T-cell (primary cell): ENCODE measurements at regions of chr22 and their contacts with region 1.

Region 1: GRCh38 chr22:40666151-40666848 is 13.0 kb upstream of the MCHR1 start:
- DNase-seq: no peak
- ATAC-seq: no peak
- H3K4me3 ChIP-seq: no peak overlapping the region
- H3K4me3 Mint-ChIP-seq: no peak overlapping the region
- H3K27ac ChIP-seq: no peak overlapping the region
- H3K27ac Mint-ChIP-seq: no peak overlapping the region
- H3K4me1 ChIP-seq: no peaks in the 10 kb centered on the region
- H3K4me1 Mint-ChIP-seq: peaks cover 10 to 14% (median 11%) of the 10 kb centered on the region in 3 donors
- H3K27me3 ChIP-seq: peaks cover 0 to 5% of the 10 kb centered on the region in 2 experiments
- H3K27me3 Mint-ChIP-seq: no peaks in the 10 kb centered on the region

Region 2: GRCh38 chr22:39478441-39479264 is 1187.6 kb before region 1 on chr22:
- CTCF ChIA-PET with region 1: interaction called in 1 of 2 experiments, 14 read pairs
- POLR2A ChIA-PET with region 1: no interaction called
- DNase-seq: peak in 3 of 35 experiments; percentile 17 to 36 (median 22)
- ATAC-seq: no peak
- H3K4me3 ChIP-seq: no peak overlapping the region
- H3K4me3 Mint-ChIP-seq: no peak overlapping the region
- H3K27ac ChIP-seq: no peak overlapping the region
- H3K27ac Mint-ChIP-seq: no peak overlapping the region
- H3K4me1 ChIP-seq: no peaks in the 10 kb centered on the region
- H3K4me1 Mint-ChIP-seq: no peaks in the 10 kb centered on the region
- H3K27me3 ChIP-seq: peaks cover 0 to 29% of the 10 kb centered on the region in 2 experiments
- H3K27me3 Mint-ChIP-seq: no peaks in the 10 kb centered on the region

Region 3: DNA sequence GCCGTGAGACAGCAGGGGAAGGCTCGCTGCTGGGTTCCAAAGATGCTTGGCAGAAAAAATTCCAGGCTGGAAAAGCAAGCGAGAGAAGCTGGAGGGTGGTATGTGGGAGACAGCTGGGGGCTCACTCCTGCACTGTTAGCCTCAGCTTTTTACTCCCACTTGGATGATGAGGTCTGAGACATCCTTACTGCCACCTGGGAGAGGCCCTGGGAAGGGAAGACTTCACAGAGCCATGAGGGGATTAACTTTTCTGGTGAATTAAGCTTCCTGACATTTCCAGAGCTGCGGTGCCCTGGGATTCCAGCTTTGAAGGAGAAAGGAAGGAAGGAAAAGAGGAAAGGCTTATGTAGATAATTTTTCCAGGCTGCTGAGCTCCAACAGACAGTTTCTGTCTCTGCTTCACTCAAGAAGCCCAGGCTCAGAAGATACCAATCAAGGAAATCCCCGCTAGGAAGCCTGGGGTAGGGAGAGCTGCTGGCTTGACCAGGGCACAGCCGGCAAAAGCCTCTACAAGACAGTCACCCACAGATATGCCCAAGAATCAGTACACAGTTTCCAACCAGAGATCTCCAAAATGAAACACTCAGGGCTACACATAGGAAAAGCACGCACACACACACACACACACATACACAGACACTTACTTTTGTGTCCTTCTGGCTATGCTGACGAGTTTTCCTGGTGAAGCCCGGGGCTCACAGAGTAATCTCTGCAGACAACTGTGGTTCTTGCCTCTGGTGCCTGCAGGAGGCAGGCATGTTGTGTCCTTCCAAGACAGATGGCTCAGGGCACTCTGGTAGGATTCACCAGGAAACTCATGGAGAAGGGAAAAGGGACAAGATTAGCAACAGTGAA is 13.9 kb after region 1 on chr22:
- CTCF ChIA-PET with region 1: no interaction called
- POLR2A ChIA-PET with region 1: no interaction called
- DNase-seq: no peak
- ATAC-seq: no peak
- H3K4me3 ChIP-seq: no peak overlapping the region
- H3K4me3 Mint-ChIP-seq: no peak overlapping the region
- H3K27ac ChIP-seq: no peak overlapping the region
- H3K27ac Mint-ChIP-seq: peak overlapping the region in 1 of 2 donors; percentile 17
- H3K4me1 ChIP-seq: peaks cover 0 to 13% of the 10 kb centered on the region in 2 experiments
- H3K4me1 Mint-ChIP-seq: peaks cover 7 to 17% (median 13%) of the 10 kb centered on the region in 3 donors
- H3K27me3 ChIP-seq: peaks cover 0 to 34% of the 10 kb centered on the region in 2 experiments
- H3K27me3 Mint-ChIP-seq: peaks cover 13 to 22% of the 10 kb centered on the region in 2 donors